Lower lobe of right lung (tissue), 2 donors: ENCODE measurements at regions of chr2 and their contacts with region 1.

Region 1: DNA sequence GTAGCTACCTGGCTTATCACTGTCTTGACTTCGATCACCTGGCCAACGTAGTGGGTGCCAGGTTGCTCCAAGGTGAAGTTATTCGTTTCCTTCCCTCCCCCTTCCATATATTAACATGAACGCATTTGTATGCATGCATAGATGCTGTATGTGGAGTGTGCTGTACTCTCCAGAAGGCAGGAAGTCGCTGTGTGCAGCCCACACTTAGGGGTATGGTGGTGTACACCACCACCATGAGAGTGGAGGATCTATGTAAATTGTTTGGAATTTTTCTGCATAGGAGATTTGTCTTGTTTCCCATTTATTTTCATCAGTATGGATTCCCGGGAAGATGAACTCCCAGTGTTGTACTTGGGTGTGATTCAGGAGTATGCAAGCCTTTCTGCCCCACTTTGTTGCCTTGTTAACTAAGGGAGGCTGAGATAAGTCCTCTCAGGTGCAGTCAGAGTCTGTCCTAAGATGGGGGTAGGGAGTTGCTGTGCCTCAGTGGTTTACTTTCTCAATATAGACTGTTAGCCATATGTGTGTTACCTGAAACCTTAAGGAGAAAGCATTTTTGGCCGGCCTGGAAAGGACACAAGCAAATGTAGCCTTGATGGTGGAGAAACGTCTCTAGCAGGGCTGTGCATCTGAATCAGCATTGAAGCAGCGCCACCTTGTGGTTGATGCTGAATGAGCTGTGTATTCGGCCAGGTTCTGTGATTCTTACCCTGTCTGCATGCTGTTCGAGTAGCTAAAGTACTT is 149.8 kb downstream of the TANC1 start:
- DNase-seq: peak; percentile 85
- ATAC-seq: peak; percentile 86 to 88
- H3K4me3 ChIP-seq: no peak overlapping the region
- H3K27ac ChIP-seq: peak overlapping the region; percentile 22
- H3K4me1 ChIP-seq: peaks cover 27% of the 10 kb centered on the region
- H3K27me3 ChIP-seq: no peaks in the 10 kb centered on the region
- CTCF ChIP-seq: peak; percentile 93

Region 2: GRCh38 chr2:158828493-158829164 is 289.7 kb before region 1 on chr2:
- intact Hi-C with region 1: no loop called
- DNase-seq: no peak
- ATAC-seq: no peak
- H3K4me3 ChIP-seq: no peak overlapping the region
- H3K27ac ChIP-seq: no peak overlapping the region
- H3K4me1 ChIP-seq: peaks cover 8% of the 10 kb centered on the region
- H3K27me3 ChIP-seq: no peaks in the 10 kb centered on the region
- CTCF ChIP-seq: no peak

Region 3: GRCh38 chr2:158903711-158904443 is 214.4 kb before region 1 on chr2:
- intact Hi-C with region 1: loop called (anchors 5 kb)
- DNase-seq: no peak
- ATAC-seq: no peak
- H3K4me3 ChIP-seq: no peak overlapping the region
- H3K27ac ChIP-seq: no peak overlapping the region
- H3K4me1 ChIP-seq: peaks cover 9% of the 10 kb centered on the region
- H3K27me3 ChIP-seq: no peaks in the 10 kb centered on the region
- CTCF ChIP-seq: no peak

Region 4: GRCh38 chr2:159381574-159381973 is 263.3 kb after region 1 on chr2:
- intact Hi-C with region 1: no loop called
- DNase-seq: no peak
- ATAC-seq: no peak
- H3K4me3 ChIP-seq: no peak overlapping the region
- H3K27ac ChIP-seq: no peak overlapping the region
- H3K4me1 ChIP-seq: no peaks in the 10 kb centered on the region
- H3K27me3 ChIP-seq: no peaks in the 10 kb centered on the region
- CTCF ChIP-seq: no peak